CD14-positive monocyte (primary cell): ENCODE measurements at regions of chr19 and their contacts with region 1.

Region 1: GRCh38 chr19:11380653-11381534 is 3.2 kb downstream of the EPOR start:
- DNase-seq: peak; percentile 91 to 95 (median 92)
- H3K4me3 ChIP-seq: peak overlapping the region; percentile 68 to 87 (median 72)
- H3K4me3 Mint-ChIP-seq: peak overlapping the region; percentile 92 to 100
- H3K27ac ChIP-seq: peak overlapping the region; percentile 81 to 95
- H3K27ac Mint-ChIP-seq: peak overlapping the region; percentile 97 to 100 (median 99)
- H3K4me1 ChIP-seq: peaks cover 69 to 89% of the 10 kb centered on the region in 2 donors
- H3K4me1 Mint-ChIP-seq: peaks cover 57% of the 10 kb centered on the region
- H3K27me3 ChIP-seq: peaks cover 0 to 19% of the 10 kb centered on the region in 2 donors
- H3K27me3 Mint-ChIP-seq: peaks cover 16 to 28% (median 21%) of the 10 kb centered on the region in 3 donors
- CTCF ChIP-seq: peak; percentile 80

Region 2: DNA sequence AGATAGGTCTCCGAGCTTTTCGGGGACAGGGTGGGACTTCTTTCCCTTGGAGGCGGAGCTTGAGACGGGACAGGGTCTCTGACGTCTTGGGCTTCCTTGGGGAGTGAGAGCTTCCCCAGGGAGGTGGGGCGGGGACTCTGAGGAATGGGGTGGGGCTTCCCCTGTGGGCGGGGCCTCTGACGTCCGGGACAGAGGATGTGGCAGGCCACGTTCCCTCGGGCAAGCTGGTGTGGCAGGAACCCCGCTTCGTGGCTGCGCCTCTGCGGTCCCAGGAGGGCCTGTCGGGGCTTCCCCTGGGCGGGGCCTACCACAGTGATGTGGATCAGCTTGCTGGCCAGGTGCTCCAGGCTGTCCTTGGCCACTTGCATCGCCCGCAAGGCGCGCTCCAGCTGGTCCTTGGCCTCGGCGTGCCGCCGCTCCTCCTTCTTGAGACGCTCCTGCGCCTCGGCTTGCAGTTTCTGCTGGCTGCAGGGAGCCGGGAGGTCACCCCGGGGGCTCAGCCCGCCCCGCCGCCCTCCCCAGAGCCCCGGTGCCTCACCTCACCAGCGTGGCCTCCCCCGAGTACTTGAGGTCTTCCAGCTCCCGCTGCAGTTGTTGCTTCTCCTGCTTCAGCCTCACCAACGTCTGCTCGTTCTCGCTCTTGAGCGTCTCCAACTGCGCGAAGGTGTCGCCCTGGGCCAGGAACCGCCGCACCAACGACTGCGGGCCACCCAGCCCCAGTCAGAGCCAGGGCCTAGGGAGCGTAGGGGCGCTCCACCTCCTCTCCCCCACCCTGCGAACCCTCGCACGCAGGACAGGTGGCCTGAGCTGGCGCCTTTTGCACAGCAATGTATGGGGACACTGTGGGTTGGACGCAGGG is 41.5 kb after region 1 on chr19:
- intact Hi-C with region 1: loop called (anchors 5 kb)
- DNase-seq: peak; percentile 46 to 76 (median 63)
- H3K4me3 ChIP-seq: peak overlapping the region in 2 of 3 experiments; percentile 13 to 82
- H3K4me3 Mint-ChIP-seq: peak overlapping the region; percentile 84 to 94
- H3K27ac ChIP-seq: no peak overlapping the region
- H3K27ac Mint-ChIP-seq: peak overlapping the region in 2 of 7 donors; percentile 11 to 78
- H3K4me1 ChIP-seq: peaks cover 37 to 47% of the 10 kb centered on the region in 2 donors
- H3K4me1 Mint-ChIP-seq: peaks cover 43% of the 10 kb centered on the region
- H3K27me3 ChIP-seq: peaks cover 39 to 66% of the 10 kb centered on the region in 2 donors
- H3K27me3 Mint-ChIP-seq: peaks cover 60 to 78% (median 70%) of the 10 kb centered on the region in 3 donors
- CTCF ChIP-seq: no peak

Region 3: GRCh38 chr19:11435058-11435832 is 54.4 kb after region 1 on chr19 and contains the starts of genes ODAD3 and PRKCSH:
- intact Hi-C with region 1: loop called in 1 of 2 experiments (anchors 2 kb)
- DNase-seq: peak; percentile 99 to 100 (median 99)
- H3K4me3 ChIP-seq: peak within 1 kb of the TSS; percentile 61 to 82 (median 77)
- H3K4me3 Mint-ChIP-seq: peak within 1 kb of the TSS; percentile 98 to 100
- H3K27ac ChIP-seq: peak within 1 kb of the TSS; percentile 63 to 82
- H3K27ac Mint-ChIP-seq: peak within 1 kb of the TSS; percentile 96 to 99 (median 97)
- H3K4me1 ChIP-seq: peaks cover 17 to 20% of the 10 kb centered on the region in 2 donors
- H3K4me1 Mint-ChIP-seq: peaks cover 21% of the 10 kb centered on the region
- H3K27me3 ChIP-seq: no peaks in the 10 kb centered on the region
- H3K27me3 Mint-ChIP-seq: peaks cover 0 to 6% (median 2%) of the 10 kb centered on the region in 3 donors
- CTCF ChIP-seq: peak; percentile 97
- polyA plus RNA-seq, gene ODAD3: 0.43 to 0.88 (median 0.61) TPM
- polyA plus RNA-seq, gene PRKCSH: 24.9 to 172 (median 28.4) TPM